Vagina (tissue), 2 donors: ENCODE measurements at regions of chr12 and their contacts with region 1.

Region 1: GRCh38 chr12:42696406-42697149 is 107.0 kb upstream of the PRICKLE1 start:
- DNase-seq: peak in 1 of 2 donors; percentile 97
- H3K4me3 ChIP-seq: no peak overlapping the region
- H3K27ac ChIP-seq: peak overlapping the region; percentile 27
- H3K4me1 ChIP-seq: peaks cover 20% of the 10 kb centered on the region
- H3K27me3 ChIP-seq: no peaks in the 10 kb centered on the region
- CTCF ChIP-seq: no peak
- POLR2A ChIP-seq: no peak

Region 2: GRCh38 chr12:42589465-42590329 is 106.9 kb before region 1 on chr12 and contains the start of gene PRICKLE1:
- intact Hi-C with region 1: loop called (anchors 5 kb)
- DNase-seq: no peak
- H3K4me3 ChIP-seq: peak within 1 kb of the TSS; percentile 88 to 93
- H3K27ac ChIP-seq: peak within 1 kb of the TSS; percentile 86
- H3K4me1 ChIP-seq: peaks cover 44% of the 10 kb centered on the region
- H3K27me3 ChIP-seq: no peaks in the 10 kb centered on the region
- CTCF ChIP-seq: no peak
- POLR2A ChIP-seq: peak in 1 of 2 donors; percentile 10
- total RNA-seq, gene PRICKLE1: 25.3 TPM

Region 3: GRCh38 chr12:43029971-43030370 is 333.4 kb after region 1 on chr12:
- intact Hi-C with region 1: no loop called
- DNase-seq: no peak
- H3K4me3 ChIP-seq: no peak overlapping the region
- H3K27ac ChIP-seq: no peak overlapping the region
- H3K4me1 ChIP-seq: no peaks in the 10 kb centered on the region
- H3K27me3 ChIP-seq: no peaks in the 10 kb centered on the region
- CTCF ChIP-seq: no peak
- POLR2A ChIP-seq: no peak